ENCODE measurements at regions of chr10 and their contacts with region 1.

Region 1: GRCh38 chr10:86376852-86377796 is 10.5 kb upstream of the GRID1 start:
- DNase-seq: peak; percentile 88 to 91
- H3K4me3 ChIP-seq: peak overlapping the region; percentile 32 to 43 (median 36)
- H3K27ac ChIP-seq: no peak overlapping the region
- H3K4me1 ChIP-seq: peaks cover 4 to 9% (median 6%) of the 10 kb centered on the region in 4 donors
- H3K27me3 ChIP-seq: peaks cover 0 to 80% (median 24%) of the 10 kb centered on the region in 3 donors
- CTCF ChIP-seq: peak in 5 of 7 experiments; percentile 69 to 99 (median 99)
- EP300 ChIP-seq: no peak
- POLR2A ChIP-seq: no peak

Region 2: DNA sequence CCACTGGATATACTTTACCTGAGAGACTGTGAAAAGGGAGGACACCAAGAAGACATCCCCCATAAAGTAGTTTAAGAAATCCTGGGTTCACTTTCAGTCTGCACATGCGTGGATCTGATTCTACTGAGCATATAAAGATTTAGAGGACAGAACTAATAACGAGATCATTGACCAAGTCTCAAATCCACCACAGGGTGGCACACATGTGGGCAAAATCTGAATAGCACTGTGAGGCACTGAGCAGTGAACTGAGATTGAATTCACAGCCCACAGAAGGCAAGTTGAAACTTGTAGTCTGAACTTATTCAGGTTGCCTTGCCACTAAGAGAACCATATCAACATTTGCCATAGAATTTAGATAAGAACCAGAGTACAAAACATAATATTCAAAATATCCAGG is 829.1 kb before region 1 on chr10:
- intact Hi-C with region 1: loop called (anchors 10 kb)
- DNase-seq: peak in 1 of 2 donors; percentile 72
- H3K4me3 ChIP-seq: no peak overlapping the region
- H3K27ac ChIP-seq: no peak overlapping the region
- H3K4me1 ChIP-seq: no peaks in the 10 kb centered on the region
- H3K27me3 ChIP-seq: no peaks in the 10 kb centered on the region
- CTCF ChIP-seq: peak in 1 of 7 experiments; percentile 17
- EP300 ChIP-seq: no peak
- POLR2A ChIP-seq: no peak

Region 3: DNA sequence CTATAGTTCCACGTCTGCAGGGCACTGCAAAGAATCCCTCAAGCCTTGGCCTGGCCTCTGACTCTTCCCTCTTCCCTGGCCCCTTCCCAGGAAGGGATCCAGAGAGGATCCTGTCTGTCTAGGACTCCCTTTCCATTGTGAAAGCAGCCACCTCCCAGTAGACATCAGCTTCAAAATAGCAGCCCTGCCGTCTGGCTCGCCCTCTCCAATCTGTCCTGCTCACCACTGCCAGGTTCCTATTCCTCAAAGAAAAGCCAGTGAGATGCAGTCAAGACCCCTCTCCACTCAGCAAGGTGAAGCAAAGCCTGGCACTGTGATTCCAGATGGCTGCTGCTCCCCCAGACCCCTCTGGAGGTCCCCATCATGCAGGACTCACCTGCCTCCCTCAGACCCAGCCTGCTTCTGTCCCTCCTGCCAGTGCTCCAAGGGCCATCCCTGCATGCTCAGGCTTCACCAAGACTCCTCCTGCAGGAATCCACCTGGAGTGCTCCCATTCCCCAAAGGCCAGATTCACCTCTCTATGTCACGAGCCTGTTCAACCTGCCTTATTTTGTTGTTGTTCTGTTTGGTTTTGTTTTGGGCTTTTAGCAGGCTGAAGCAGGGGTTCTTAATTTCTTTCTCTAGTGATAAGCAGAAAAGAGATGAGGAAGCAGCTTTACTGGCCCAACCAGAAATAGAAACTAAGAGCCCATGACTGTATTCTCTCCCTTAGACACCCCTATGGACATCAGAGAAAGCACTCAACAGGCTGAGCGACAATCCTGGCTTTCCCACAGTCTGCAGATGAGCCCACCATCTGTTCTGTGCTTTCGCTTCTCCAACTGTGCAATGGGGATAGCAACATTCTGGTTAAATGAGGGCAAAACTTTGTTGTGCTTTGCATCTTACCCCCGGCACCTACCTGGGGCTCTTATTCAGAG is 315.6 kb before region 1 on chr10:
- intact Hi-C with region 1: no loop called
- DNase-seq: peak in 1 of 2 donors; percentile 10
- H3K4me3 ChIP-seq: no peak overlapping the region
- H3K27ac ChIP-seq: no peak overlapping the region
- H3K4me1 ChIP-seq: no peaks in the 10 kb centered on the region
- H3K27me3 ChIP-seq: no peaks in the 10 kb centered on the region
- CTCF ChIP-seq: no peak
- EP300 ChIP-seq: no peak
- POLR2A ChIP-seq: no peak